ENCODE measurements at regions of chr14 and their contacts with region 1.

Region 1: GRCh38 chr14:54627540-54628363 is 60.8 kb downstream of the SAMD4A start:
- DNase-seq: peak in 4 of 9 experiments; percentile 11 to 70 (median 42)
- ATAC-seq: peak; percentile 66
- H3K4me3 ChIP-seq: peak overlapping the region; percentile 27 to 38
- H3K4me3 Mint-ChIP-seq: peak overlapping the region; percentile 74
- H3K27ac ChIP-seq: peak overlapping the region; percentile 56 to 86
- H3K27ac Mint-ChIP-seq: peak overlapping the region; percentile 74
- H3K4me1 ChIP-seq: peaks cover 38% of the 10 kb centered on the region
- H3K4me1 Mint-ChIP-seq: peaks cover 40% of the 10 kb centered on the region
- H3K27me3 ChIP-seq: no peaks in the 10 kb centered on the region
- H3K27me3 Mint-ChIP-seq: no peaks in the 10 kb centered on the region
- CTCF ChIP-seq: no peak

Region 2: DNA sequence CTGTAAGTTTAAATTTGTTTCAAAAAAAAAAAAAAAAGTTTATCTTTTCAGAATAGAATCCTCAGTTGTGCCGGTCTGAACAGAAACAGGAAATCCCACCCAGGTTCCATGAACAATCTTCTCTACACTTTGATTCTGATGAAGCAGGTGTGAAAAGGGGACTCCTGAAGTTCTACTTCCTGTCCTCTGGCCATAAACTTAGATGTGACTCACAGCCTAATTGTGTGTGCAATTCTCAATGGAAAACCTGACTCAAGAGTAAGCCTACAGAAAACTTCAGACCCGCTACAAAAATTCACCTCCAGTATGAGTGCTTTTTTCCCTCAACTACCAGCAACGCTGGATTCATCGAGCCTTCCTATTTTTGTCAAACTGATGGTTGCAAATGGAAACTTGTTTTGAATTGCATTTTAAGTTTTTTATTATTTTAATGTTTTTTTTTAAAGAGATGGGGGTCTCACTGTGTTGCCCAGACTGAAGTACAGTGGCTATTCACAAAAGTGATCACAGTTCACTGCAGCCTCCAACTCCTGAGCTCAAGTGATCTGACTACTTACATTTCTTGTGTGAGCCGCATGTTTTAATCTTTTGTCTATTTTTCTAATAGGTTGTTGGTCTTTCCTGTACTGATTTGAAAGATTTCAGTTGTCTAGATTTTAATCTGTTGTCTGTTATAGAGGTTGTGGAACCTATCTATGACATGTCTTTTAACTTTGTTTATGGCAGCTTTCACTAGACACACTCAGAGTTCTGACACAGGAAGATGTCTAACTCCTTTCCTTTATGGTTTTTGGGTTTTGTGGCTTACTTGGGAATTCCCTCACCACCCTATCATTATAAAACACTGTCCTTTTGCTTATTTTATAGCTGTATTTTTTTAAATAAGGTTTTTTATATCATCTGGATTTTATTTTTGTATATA is 746.3 kb after region 1 on chr14:
- CTCF ChIA-PET with region 1: no interaction called
- POLR2A ChIA-PET with region 1: no interaction called
- intact Hi-C with region 1: loop called in 1 of 2 experiments (anchors 5 kb)
- DNase-seq: peak in 6 of 9 experiments; percentile 5 to 86 (median 22)
- ATAC-seq: peak; percentile 85
- H3K4me3 ChIP-seq: no peak overlapping the region
- H3K4me3 Mint-ChIP-seq: peak overlapping the region; percentile 36
- H3K27ac ChIP-seq: peak overlapping the region; percentile 35 to 52
- H3K27ac Mint-ChIP-seq: peak overlapping the region; percentile 84
- H3K4me1 ChIP-seq: peaks cover 14% of the 10 kb centered on the region
- H3K4me1 Mint-ChIP-seq: peaks cover 30% of the 10 kb centered on the region
- H3K27me3 ChIP-seq: no peaks in the 10 kb centered on the region
- H3K27me3 Mint-ChIP-seq: no peaks in the 10 kb centered on the region
- CTCF ChIP-seq: no peak